Activated naive CD4-positive, alpha-beta T cell treated with anti-CD3 and anti-CD28 coated beads for 36 hours (primary cell): ENCODE measurements at regions of chr12 and their contacts with region 1.

Region 1: DNA sequence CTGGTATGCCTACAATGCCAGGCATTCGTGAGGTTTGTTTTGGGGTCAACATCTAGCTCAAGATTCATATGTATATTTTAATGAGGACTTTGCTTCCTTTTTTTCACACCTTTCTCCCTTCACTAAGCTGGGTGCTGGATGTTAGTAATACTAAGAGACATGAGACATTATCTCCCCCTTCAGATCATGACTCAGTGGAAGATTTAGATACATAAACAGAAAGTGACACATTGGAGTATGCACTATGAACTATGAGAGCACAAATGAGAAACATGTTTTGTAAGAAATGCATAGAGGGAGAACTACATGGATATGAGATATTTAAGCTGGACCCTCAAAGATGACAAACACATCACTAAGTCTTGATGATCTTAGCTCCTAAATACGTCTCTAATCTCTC is 286.3 kb downstream of the RPAP3 start:
- DNase-seq: no peak
- H3K4me3 Mint-ChIP-seq: no peak overlapping the region
- H3K27ac Mint-ChIP-seq: peak overlapping the region; percentile 83
- H3K4me1 Mint-ChIP-seq: peaks cover 51% of the 10 kb centered on the region
- H3K27me3 Mint-ChIP-seq: no peaks in the 10 kb centered on the region

Region 2: GRCh38 chr12:46794593-46795190 is 624.8 kb before region 1 on chr12:
- CTCF ChIA-PET with region 1: no interaction called
- intact Hi-C with region 1: loop called (anchors 2 kb)
- DNase-seq: peak; percentile 46
- H3K4me3 Mint-ChIP-seq: no peak overlapping the region
- H3K27ac Mint-ChIP-seq: peak overlapping the region; percentile 80
- H3K4me1 Mint-ChIP-seq: peaks cover 27% of the 10 kb centered on the region
- H3K27me3 Mint-ChIP-seq: no peaks in the 10 kb centered on the region

Region 3: DNA sequence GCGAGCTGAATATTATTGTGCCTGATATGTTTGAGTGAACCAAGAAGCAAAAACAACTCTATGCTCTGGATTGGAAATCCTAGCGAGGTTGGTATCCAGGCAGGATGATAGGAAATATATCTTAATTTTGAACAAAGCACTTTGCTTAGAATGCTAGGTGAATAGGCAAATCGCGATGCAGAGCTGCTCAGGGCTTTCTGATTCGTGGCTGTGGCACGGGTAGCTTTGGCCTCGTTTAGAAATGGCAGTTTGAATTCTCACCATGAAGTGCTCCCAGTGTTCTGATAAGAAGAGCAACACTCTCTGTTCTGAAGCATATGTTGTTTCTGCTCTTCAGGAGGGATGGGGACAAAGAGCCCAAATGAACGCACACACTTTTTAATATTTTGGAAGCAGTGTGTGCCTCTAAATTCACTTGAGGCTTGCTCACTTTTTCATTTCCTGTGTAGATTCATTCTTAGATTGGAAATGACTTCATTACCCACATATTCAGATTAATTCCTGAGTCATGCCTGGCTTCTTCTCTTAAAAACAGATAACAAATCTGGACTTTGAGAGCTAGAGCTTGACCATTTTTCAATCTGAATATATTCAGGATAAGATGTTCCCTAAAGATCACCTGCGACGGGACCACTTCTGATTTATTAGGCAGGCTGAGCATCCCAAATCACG is 85.4 kb after region 1 on chr12:
- CTCF ChIA-PET with region 1: no interaction called
- intact Hi-C with region 1: loop called (anchors 2 kb)
- DNase-seq: no peak
- H3K4me3 Mint-ChIP-seq: no peak overlapping the region
- H3K27ac Mint-ChIP-seq: peak overlapping the region; percentile 21
- H3K4me1 Mint-ChIP-seq: peaks cover 20% of the 10 kb centered on the region
- H3K27me3 Mint-ChIP-seq: no peaks in the 10 kb centered on the region

Region 4: DNA sequence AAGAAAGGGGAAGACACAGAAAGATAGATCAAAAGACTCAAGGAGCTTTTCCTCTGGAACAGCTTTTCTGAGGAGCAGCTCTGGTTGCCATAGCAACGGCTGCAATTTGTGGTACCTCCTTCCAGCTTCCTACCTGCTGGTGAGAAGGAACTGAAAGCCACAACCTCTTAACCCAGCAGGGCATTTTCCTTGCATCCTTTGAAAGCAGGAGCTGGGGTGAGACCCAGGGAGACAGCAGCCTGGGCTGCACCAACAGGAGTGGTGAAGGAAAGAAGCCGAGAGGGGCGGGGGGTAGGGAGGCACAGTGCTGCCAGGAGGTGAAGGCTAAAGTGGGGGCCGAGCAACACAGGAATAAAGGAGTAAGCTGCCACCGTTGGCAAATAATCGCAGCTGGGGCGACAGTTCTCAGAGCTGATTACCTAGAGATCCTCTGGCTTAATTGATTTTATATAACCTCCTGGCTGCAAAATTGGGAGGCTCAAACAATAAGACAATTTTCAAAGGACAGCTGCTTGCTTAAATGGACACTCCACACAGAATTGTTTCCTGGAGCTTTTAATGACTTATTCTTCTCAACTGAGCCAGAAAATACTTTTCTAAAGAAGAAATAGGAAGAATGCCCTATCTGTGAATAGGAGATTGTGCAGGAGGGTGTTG is 156.9 kb after region 1 on chr12:
- CTCF ChIA-PET with region 1: no interaction called
- intact Hi-C with region 1: loop called (anchors 1 kb)
- DNase-seq: no peak
- H3K4me3 Mint-ChIP-seq: no peak overlapping the region
- H3K27ac Mint-ChIP-seq: no peak overlapping the region
- H3K4me1 Mint-ChIP-seq: peaks cover 30% of the 10 kb centered on the region
- H3K27me3 Mint-ChIP-seq: no peaks in the 10 kb centered on the region